Activated CD4-positive, alpha-beta T cell treated with anti-CD3 and anti-CD28 coated beads for 36 hours (primary cell): ENCODE measurements at regions of chr13 and their contacts with region 1.

Region 1: GRCh38 chr13:78595495-78596398 is 7.6 kb downstream of the POU4F1 start:
- DNase-seq: peak; percentile 58
- ATAC-seq: peak; percentile 80
- H3K4me3 Mint-ChIP-seq: peak overlapping the region; percentile 36
- H3K27ac Mint-ChIP-seq: no peak overlapping the region
- H3K4me1 Mint-ChIP-seq: peaks cover under 1% of the 10 kb centered on the region
- H3K27me3 Mint-ChIP-seq: peaks cover 73% of the 10 kb centered on the region

Region 2: DNA sequence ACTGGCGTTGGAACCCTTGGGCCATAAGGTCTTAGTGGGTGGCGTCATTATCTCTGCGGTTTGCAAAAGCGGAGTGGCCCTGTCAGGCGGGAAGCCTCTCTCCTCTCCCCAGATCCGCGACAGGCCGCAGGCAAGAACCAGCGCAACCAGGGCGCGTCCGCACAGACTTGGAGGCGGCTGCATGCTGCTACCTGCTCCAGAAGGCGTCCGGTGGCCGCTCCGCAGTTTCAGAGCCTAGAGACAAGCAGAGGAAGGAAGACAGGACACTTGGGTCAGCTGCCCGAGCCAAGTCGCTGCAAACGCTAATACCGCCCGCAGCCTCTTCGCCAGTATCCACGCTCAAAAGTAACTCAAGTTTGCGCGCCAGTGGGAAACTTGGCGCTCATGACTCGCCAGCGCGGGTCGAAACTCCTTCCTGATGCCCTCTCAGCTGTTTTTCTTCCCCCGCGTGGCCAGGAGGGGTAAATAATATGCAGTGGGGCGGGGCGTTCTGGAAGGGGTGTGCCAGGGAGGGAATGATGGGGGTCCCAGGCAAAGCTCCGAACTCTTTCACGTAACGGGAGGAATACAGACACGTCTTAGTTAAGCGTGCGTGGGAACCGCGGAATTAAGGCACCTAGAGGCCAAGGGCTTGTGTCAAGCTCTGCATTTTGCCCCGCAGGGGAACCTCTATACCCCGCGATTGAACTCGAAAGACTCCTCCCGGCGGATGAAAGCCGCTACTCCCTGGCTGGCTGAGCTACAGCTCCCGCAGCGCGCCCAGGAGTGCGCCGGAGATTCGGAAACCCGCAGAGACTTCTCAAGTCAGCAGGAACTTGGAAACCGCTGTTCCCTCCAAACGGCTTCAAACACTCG is 677.1 kb before region 1 on chr13 and contains the start of gene EDNRB:
- CTCF ChIA-PET with region 1: no interaction called
- POLR2A ChIA-PET with region 1: no interaction called
- intact Hi-C with region 1: loop called in 1 of 2 experiments (anchors 5 kb)
- DNase-seq: peak; percentile 33
- ATAC-seq: peak; percentile 69
- H3K4me3 Mint-ChIP-seq: no peak within 1 kb of the TSS
- H3K27ac Mint-ChIP-seq: no peak within 1 kb of the TSS
- H3K4me1 Mint-ChIP-seq: no peaks in the 10 kb centered on the region
- H3K27me3 Mint-ChIP-seq: peaks cover 15% of the 10 kb centered on the region
- total RNA-seq, gene EDNRB: not detected

Region 3: GRCh38 chr13:78520425-78520824 is 75.3 kb before region 1 on chr13:
- CTCF ChIA-PET with region 1: no interaction called
- POLR2A ChIA-PET with region 1: no interaction called
- intact Hi-C with region 1: no loop called
- DNase-seq: no peak
- ATAC-seq: no peak
- H3K4me3 Mint-ChIP-seq: no peak overlapping the region
- H3K27ac Mint-ChIP-seq: no peak overlapping the region
- H3K4me1 Mint-ChIP-seq: no peaks in the 10 kb centered on the region
- H3K27me3 Mint-ChIP-seq: peaks cover 7% of the 10 kb centered on the region

Region 4: GRCh38 chr13:78609464-78610205 is 13.9 kb after region 1 on chr13:
- CTCF ChIA-PET with region 1: no interaction called
- POLR2A ChIA-PET with region 1: no interaction called
- intact Hi-C with region 1: loop called in 1 of 2 experiments (anchors 2 kb)
- DNase-seq: no peak
- ATAC-seq: no peak
- H3K4me3 Mint-ChIP-seq: peak overlapping the region; percentile 56
- H3K27ac Mint-ChIP-seq: no peak overlapping the region
- H3K4me1 Mint-ChIP-seq: peaks cover 28% of the 10 kb centered on the region
- H3K27me3 Mint-ChIP-seq: peaks cover 63% of the 10 kb centered on the region